Esophagus muscularis mucosa (tissue), 4 donors: ENCODE measurements at regions of chr6 and their contacts with region 1.

Region 1: DNA sequence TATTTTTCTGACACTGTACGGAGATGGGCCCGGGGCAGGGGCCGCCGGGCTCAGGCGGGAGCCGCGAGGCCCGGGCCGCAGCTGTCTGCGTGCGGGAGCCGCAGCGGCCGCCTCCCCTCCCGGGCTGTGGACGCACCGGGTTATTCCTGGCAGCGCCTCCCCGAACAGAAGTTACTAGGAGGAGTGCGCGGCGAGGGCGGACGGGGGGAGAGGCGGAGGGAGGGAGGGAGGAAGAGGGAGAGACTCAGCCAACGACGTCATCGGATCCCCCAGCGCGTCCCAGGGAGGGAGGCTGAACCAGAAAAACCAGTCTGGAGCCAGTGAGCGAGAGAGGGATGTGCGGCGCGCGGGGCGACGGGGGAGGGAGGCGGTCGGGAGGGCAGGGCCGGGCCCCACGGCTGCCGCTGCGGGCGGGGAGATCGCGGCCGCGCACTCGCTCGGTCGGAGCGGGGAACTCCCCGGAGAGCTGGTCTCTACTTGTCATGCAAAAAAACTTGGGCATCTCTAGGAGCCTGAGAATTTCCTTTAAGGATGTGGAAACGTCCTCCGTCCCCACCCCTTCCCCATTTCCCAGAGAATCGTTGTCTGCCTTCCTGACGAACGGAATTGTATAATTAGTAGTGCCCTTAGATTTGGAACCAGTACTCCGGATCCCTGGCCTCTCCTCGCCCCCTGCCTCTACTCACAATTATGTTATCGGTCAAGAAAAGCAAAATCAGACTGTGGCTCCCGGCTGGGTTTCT is 1.4 kb upstream of the HIVEP2 start:
- DNase-seq: peak; percentile 99
- H3K4me3 ChIP-seq: peak overlapping the region; percentile 72 to 98 (median 94)
- H3K27ac ChIP-seq: peak overlapping the region; percentile 96 to 100 (median 98)
- H3K4me1 ChIP-seq: peaks cover 17 to 34% (median 32%) of the 10 kb centered on the region in 4 donors
- H3K27me3 ChIP-seq: no peaks in the 10 kb centered on the region
- CTCF ChIP-seq: no peak
- EP300 ChIP-seq: peak; percentile 8
- POLR2A ChIP-seq: peak; percentile 93

Region 2: DNA sequence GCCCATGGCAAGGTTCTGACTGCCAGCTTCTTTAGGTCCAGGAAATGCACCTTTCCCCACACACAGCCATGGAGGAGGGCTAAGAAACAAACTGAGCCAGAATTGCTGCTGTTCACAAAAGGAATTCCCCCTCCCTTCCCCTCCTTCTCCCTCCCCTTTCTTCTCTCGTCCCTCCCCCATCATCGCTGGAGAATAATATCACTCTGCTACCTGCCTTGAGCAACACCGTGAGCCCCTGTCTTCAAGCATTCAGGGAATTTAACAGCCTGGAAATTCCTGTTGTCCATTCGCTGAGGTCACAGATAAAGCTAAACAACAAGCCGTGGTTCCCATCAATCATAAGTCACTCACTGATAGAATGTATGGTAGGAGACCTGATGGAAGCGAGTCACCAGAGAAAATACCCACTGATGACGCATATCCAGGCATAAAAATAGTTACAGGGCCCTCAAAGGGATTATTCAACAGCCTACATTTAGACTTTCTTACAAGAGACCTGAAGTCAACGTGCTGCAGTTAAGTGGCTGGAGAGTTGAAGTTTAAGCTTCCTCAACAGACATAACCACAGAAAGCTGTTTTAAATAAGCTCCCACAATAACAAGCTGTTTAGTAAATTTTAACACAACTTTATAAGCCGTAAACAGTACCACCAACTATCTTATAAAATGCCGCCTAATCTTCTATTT is 61.0 kb before region 1 on chr6:
- intact Hi-C with region 1: loop called (anchors 2 kb)
- DNase-seq: no peak
- H3K4me3 ChIP-seq: peak overlapping the region; percentile 46 to 55 (median 50)
- H3K27ac ChIP-seq: peak overlapping the region; percentile 54 to 67 (median 58)
- H3K4me1 ChIP-seq: peaks cover 36 to 57% (median 40%) of the 10 kb centered on the region in 4 donors
- H3K27me3 ChIP-seq: no peaks in the 10 kb centered on the region
- CTCF ChIP-seq: no peak
- EP300 ChIP-seq: no peak
- POLR2A ChIP-seq: no peak

Region 3: GRCh38 chr6:143060354-143060805 is 114.0 kb after region 1 on chr6:
- intact Hi-C with region 1: loop called (anchors 5 kb)
- DNase-seq: peak; percentile 95
- H3K4me3 ChIP-seq: peak overlapping the region; percentile 70 to 91 (median 80)
- H3K27ac ChIP-seq: peak overlapping the region; percentile 87 to 95 (median 94)
- H3K4me1 ChIP-seq: peaks cover 6 to 34% (median 20%) of the 10 kb centered on the region in 4 donors
- H3K27me3 ChIP-seq: no peaks in the 10 kb centered on the region
- CTCF ChIP-seq: peak in 1 of 3 experiments; percentile 11
- EP300 ChIP-seq: peak; percentile 0
- POLR2A ChIP-seq: peak; percentile 52